ENCODE measurements at regions of chr6 and their contacts with region 1.

Region 1: DNA sequence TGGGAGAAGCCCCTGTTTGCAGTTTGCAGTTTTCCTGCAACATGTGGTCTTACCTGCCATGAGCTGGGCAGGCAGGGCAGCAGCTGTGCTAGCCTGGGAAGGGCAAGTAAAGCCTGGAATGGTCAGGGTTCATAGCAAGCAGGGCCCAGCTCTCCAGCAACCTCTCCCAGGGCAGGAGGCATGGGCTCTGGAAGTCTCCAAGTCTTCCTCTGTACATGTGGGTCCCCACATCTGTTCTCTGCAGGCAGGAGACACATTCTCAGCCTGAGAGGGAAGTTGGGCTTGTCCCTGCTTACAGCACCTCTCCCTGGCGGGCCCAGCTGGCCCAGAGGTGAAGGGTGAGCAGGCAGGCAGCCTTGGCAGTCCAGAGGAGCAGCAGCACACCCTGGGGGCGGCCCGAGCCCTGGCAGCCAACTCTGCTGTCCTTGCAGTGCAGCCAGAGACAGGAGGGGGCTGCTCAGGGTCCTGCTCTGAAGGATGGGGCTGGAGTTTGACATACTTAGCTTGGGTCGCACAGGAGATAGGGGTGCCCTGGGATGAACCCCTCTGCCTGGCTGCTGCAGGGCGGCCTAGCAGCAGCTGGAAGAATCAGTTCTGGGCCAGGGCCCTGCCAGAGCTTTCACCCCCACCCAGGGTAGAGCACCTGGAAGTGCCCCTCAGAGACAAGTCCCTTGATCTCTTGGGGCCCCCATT is 176.0 kb downstream of the MRPL14 start:
- DNase-seq: no peak
- H3K4me3 ChIP-seq: no peak overlapping the region
- CTCF ChIP-seq: peak; percentile 63

Region 2: GRCh38 chr6:43723737-43724295 is 227.4 kb before region 1 on chr6:
- CTCF ChIA-PET with region 1: interaction called, 11 read pairs
- POLR2A ChIA-PET with region 1: no interaction called
- DNase-seq: no peak
- H3K4me3 ChIP-seq: no peak overlapping the region
- CTCF ChIP-seq: peak; percentile 65

Region 3: GRCh38 chr6:43933148-43933885 is 17.9 kb before region 1 on chr6:
- CTCF ChIA-PET with region 1: interaction called, 14 read pairs
- POLR2A ChIA-PET with region 1: interaction called, 4 read pairs
- DNase-seq: no peak
- H3K4me3 ChIP-seq: no peak overlapping the region
- CTCF ChIP-seq: no peak

Region 4: GRCh38 chr6:43972913-43973300 is 21.7 kb after region 1 on chr6:
- CTCF ChIA-PET with region 1: interaction called, 18 read pairs
- POLR2A ChIA-PET with region 1: no interaction called
- DNase-seq: peak; percentile 78
- H3K4me3 ChIP-seq: no peak overlapping the region
- CTCF ChIP-seq: no peak